ENCODE measurements at regions of chr6 and their contacts with region 1.

Region 1: DNA sequence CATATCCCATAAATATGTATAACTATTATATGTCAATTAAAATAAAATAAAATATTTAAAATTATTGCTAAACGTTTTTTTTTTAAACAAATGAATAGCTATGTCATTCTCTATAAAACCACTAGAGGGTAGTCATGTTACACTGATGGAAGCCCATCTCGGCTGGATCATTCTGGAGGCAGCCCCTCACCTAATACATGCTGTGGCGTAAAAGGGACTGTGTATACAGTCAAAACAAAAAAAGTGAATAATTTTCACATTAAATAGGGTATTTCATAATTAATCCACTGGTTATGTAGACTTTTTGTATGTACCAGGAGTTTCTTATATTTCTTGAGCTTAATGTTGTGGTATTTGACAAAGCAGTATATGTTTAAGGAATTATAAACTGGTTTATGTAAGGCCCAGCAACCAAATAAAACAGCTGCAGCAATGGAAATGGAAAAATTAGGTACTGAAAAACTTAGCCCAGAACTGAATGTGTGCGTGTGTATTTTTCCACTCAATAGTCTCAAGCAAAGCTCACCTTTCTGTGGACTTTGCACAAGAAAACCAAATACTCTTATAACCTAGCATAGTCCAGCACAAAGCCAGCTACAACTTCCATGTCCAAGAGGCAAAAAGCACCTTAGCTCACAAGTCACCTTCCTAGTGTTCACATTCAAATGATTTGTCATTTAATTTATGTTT is 81.7 kb downstream of the COL9A1 start:
- DNase-seq: no peak
- H3K4me3 Mint-ChIP-seq: no peak overlapping the region
- H3K27ac Mint-ChIP-seq: no peak overlapping the region
- H3K4me1 Mint-ChIP-seq: peaks cover 2% of the 10 kb centered on the region
- H3K27me3 Mint-ChIP-seq: peaks cover 9% of the 10 kb centered on the region

Region 2: GRCh38 chr6:70196531-70196930 is 24.6 kb before region 1 on chr6:
- CTCF ChIA-PET with region 1: no interaction called
- POLR2A ChIA-PET with region 1: no interaction called
- intact Hi-C with region 1: no loop called
- DNase-seq: no peak
- H3K4me3 Mint-ChIP-seq: no peak overlapping the region
- H3K27ac Mint-ChIP-seq: no peak overlapping the region
- H3K4me1 Mint-ChIP-seq: no peaks in the 10 kb centered on the region
- H3K27me3 Mint-ChIP-seq: peaks cover 18% of the 10 kb centered on the region

Region 3: DNA sequence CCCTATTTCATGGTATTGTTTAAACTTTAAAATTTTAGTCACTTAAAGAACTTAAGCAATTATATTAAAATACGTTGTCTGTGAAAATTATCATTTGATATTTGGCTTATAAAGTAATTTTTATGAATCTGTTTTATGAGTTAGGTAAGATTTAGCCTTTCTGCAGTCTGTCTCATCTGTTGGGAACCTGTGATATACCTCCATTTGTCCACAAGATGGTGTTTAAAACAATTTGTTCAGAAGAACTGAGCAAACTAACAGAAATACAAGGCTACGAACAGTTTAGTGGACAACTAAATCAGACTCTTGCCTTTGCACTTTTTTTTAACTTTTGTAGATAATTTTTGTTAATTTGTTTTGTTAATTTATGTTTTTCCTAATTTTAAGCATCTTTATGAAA is 10.7 kb before region 1 on chr6:
- CTCF ChIA-PET with region 1: interaction called, 10 read pairs
- POLR2A ChIA-PET with region 1: no interaction called
- intact Hi-C with region 1: no loop called
- DNase-seq: no peak
- H3K4me3 Mint-ChIP-seq: no peak overlapping the region
- H3K27ac Mint-ChIP-seq: no peak overlapping the region
- H3K4me1 Mint-ChIP-seq: no peaks in the 10 kb centered on the region
- H3K27me3 Mint-ChIP-seq: peaks cover 11% of the 10 kb centered on the region

Region 4: GRCh38 chr6:70231311-70231710 is 10.1 kb after region 1 on chr6:
- CTCF ChIA-PET with region 1: interaction called, 36 read pairs
- POLR2A ChIA-PET with region 1: no interaction called
- intact Hi-C with region 1: no loop called
- DNase-seq: no peak
- H3K4me3 Mint-ChIP-seq: no peak overlapping the region
- H3K27ac Mint-ChIP-seq: no peak overlapping the region
- H3K4me1 Mint-ChIP-seq: no peaks in the 10 kb centered on the region
- H3K27me3 Mint-ChIP-seq: no peaks in the 10 kb centered on the region

Region 5: GRCh38 chr6:71012866-71013469 is 791.8 kb after region 1 on chr6:
- CTCF ChIA-PET with region 1: interaction called, 6 read pairs
- POLR2A ChIA-PET with region 1: no interaction called
- intact Hi-C with region 1: loop called (anchors 5 kb)
- DNase-seq: no peak
- H3K4me3 Mint-ChIP-seq: no peak overlapping the region
- H3K27ac Mint-ChIP-seq: no peak overlapping the region
- H3K4me1 Mint-ChIP-seq: no peaks in the 10 kb centered on the region
- H3K27me3 Mint-ChIP-seq: peaks cover 18% of the 10 kb centered on the region